Gastrocnemius medialis (tissue), 4 donors: ENCODE measurements at regions of chr1 and their contacts with region 1.

Region 1: DNA sequence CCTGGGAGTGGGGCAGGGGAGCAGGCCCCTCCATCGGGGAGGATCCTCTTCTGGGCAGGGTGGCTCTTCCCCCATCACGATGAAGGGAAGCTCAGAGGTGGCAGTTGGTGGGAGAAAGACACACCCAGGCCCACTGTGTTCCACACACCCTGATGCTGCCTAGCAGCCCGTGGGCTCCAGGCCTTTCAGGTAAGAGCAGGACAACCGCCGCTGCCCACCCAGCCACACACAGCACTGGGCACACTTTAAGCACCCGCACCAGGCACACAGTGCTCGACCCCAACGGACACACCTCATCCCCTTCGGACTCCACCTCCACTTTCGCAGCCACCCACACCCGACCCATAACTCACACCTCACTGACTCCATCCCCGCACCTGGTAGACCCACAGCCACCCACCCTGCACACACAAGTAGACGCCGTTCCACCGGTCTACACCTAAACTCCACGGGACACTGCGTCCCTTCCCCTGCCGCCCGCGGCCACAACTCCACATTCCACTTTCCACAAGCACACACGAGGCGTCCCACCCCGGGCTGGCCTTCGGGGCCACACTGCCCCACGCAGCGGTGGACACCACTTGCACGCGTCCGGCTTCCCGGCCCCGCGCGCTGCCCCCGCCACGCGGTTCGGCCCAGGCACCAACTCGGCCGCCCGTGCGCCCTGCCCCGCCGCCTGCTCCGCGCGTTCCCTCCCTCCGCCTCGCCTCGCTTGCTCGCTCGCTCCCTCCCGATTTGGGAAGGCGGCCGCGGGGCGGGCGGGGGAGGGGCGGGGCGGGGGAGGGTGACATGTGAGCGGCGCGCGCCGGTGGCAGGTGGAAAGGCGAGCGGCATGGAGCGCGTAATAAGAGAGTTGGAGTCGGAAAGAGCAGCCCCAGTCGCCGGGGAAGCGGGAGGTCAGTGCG is at the start of gene KCNQ4:
- DNase-seq: peak; percentile 67 to 79
- ATAC-seq: peak; percentile 77
- H3K4me3 ChIP-seq: peak within 1 kb of the TSS; percentile 50 to 61 (median 59)
- H3K27ac ChIP-seq: peak within 1 kb of the TSS; percentile 79 to 93 (median 85)
- H3K4me1 ChIP-seq: peaks cover 0 to 24% of the 10 kb centered on the region in 2 donors
- H3K27me3 ChIP-seq: no peaks in the 10 kb centered on the region
- CTCF ChIP-seq: no peak
- POLR2A ChIP-seq: peak; percentile 38 to 45
- total RNA-seq, gene KCNQ4: 2.9 to 8.2 (median 3.5) TPM

Region 2: GRCh38 chr1:40862008-40862863 is 79.0 kb after region 1 on chr1 and contains the start of gene CITED4:
- in situ Hi-C with region 1: loop called in 3 of 4 experiments (anchors 10 kb)
- intact Hi-C with region 1: loop called (anchors 5 kb)
- DNase-seq: peak; percentile 90 to 96
- ATAC-seq: peak; percentile 85 to 90
- H3K4me3 ChIP-seq: peak within 1 kb of the TSS; percentile 53 to 84 (median 71)
- H3K27ac ChIP-seq: peak within 1 kb of the TSS; percentile 81 to 93 (median 85)
- H3K4me1 ChIP-seq: peaks cover 11 to 18% of the 10 kb centered on the region in 2 donors
- H3K27me3 ChIP-seq: no peaks in the 10 kb centered on the region
- CTCF ChIP-seq: peak in 1 of 5 experiments; percentile 27
- POLR2A ChIP-seq: peak; percentile 95 to 97
- total RNA-seq, gene CITED4: 15.9 to 30.8 (median 23.1) TPM